ENCODE measurements at regions of chr1 and their contacts with region 1.

Region 1: GRCh38 chr1:64268653-64269557 is 65.5 kb downstream of the UBE2U start:
- DNase-seq: no peak

Region 2: DNA sequence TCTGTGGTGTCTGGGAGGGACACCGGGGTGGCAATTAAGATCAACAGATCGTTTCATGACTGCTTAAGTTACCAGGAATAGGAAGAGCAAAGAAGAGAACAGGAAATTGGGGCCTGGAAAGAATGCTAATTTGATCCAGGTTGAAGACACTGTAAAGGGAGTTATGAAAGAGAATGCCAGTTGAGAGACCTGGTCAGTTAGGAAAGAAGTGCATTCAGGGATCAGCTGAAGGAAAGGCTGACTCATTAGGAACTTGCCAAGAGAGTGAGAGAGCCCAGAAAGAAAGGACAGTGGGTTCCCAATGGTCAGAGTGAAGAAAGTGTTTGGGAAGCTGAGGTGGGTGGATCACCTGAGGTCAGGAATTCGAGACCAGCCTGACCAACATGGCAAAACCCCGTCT is 54.1 kb after region 1 on chr1:
- intact Hi-C with region 1: no loop called
- DNase-seq: no peak

Region 3: GRCh38 chr1:64487061-64487460 is 218.2 kb after region 1 on chr1:
- intact Hi-C with region 1: loop called (anchors 10 kb)
- DNase-seq: no peak

Region 4: DNA sequence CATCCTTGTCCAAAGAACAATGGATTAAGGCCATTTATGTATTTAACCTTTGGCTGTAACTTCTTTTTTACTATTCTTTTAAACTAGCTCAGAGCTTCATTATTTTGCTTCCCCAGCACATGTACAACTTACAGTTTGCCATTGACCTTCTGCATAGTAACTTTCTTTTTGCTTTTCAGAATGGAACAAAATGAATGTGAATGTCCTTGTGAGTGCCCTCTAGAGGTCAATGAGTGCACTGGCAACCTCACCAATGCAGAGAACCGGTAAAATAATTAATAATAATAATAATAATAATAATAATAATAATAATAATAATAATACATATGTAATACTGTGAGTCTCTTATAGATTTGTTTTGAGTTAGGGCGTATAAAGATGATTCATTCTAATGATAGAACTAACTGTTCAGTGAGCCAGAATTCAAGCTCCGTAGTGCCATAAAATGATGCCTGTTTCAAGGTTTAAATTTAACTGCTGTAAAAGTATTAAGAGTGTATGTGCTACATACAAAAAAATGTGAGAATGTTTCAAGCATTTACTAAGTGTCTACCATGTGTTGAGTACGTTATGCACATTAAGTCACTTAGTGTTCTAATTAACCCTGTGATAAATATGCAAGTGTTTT is 406.9 kb after region 1 on chr1:
- intact Hi-C with region 1: loop called (anchors 5 kb)
- DNase-seq: no peak

Region 5: DNA sequence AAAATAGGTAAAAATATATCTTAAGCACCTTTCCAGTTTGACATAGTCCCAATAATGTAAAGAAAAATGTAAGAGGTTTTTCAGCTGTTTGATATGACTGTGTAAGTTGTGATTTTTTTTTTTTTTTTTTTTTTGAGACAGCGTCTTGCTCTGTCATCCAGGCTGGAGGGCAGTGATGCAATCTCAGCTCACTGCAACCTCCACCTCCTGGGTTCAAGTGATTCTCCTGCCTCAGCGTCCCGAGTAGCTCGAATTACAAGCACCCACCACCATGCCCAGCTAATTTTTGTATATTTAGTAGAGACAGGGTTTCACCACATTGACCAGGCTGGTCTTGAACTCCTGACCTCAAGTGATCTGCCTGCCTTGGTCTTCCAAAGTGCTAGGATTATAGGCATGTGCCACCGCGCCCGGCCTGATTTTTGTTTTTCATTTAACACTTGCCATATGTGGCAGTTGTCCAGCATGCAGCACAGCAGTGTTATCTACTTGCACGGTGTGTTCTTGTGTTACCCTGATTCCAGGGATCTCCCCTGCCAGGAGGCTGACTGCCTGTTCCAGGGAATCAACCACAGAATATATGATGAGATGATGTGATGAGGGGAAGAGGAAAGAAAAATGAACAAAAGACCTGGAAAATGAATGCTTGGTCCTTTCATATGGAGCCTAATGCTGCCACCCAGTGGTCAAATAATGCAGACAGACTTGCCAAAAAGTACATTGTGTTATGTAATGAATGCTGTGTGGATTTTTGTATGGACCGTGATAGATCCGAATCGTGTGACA is 555.0 kb after region 1 on chr1:
- intact Hi-C with region 1: loop called (anchors 2 kb)
- DNase-seq: no peak

Region 6: GRCh38 chr1:65687428-65688214 is 1418.7 kb after region 1 on chr1:
- intact Hi-C with region 1: loop called (anchors 5 kb)
- DNase-seq: peak; percentile 91

Measured in cardiac septum (tissue), 1 donor.